ENCODE measurements at regions of chr6 and their contacts with region 1.

Region 1: DNA sequence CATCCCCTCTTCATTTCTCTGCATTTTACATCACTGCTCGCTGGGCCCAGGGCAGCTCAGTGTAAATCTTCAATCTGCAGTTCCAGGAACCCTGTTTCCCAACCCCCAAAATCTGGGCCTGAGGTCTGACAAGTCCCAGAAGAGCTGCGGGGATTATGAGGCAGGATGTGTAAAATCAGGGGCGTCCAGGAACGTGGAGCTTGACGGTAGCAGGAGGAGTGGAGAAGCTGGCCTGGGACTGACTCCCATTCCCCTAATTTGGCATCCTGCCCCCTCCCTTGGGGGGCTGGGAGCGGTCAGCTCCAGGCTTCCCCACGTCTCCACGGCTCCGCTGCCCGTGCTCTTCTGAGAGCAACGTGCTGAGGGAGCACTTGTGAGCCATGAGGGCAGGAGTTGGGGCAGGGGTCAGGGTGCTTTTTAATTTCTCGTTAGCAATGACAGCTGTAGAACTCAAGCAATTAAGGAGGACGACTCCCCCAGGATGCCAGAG is 23.4 kb upstream of the VEGFA start:
- DNase-seq: no peak
- H3K4me3 ChIP-seq: no peak overlapping the region
- CTCF ChIP-seq: no peak

Region 2: DNA sequence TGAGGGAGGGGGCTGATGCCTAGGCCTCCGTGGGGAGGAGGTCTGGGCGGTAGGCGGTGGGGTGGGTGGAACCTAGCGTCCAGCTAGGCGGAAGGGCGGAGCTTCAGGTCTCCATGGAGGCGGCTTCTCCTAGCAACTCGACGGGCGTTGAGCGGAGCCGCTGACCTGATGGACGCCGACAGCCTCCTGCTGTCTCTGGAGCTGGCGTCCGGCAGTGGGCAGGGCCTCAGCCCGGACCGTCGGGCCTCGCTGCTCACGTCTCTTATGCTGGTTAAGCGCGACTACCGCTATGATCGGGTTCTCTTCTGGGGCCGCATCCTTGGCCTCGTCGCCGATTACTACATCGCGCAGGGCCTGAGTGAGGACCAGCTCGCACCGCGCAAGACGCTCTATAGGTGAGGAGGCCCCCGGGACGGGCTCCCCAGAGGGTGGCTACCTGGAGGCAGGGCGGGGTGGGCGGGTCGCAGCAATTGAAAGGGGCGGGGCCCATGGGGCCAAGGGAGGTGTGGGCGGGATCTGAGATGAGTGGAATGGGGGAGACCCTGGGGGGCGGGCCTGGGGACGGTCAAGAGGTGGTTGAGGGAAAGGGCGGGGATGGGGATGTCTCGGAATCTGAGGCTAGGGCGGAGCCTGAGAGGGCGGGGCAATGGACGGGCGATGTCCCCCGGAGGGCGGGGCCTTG is 101.6 kb before region 1 on chr6 and contains the start of gene RSPH9:
- in situ Hi-C with region 1: loop called (anchors 5 kb)
- DNase-seq: no peak
- H3K4me3 ChIP-seq: peak within 1 kb of the TSS; percentile 45
- CTCF ChIP-seq: no peak

Region 3: DNA sequence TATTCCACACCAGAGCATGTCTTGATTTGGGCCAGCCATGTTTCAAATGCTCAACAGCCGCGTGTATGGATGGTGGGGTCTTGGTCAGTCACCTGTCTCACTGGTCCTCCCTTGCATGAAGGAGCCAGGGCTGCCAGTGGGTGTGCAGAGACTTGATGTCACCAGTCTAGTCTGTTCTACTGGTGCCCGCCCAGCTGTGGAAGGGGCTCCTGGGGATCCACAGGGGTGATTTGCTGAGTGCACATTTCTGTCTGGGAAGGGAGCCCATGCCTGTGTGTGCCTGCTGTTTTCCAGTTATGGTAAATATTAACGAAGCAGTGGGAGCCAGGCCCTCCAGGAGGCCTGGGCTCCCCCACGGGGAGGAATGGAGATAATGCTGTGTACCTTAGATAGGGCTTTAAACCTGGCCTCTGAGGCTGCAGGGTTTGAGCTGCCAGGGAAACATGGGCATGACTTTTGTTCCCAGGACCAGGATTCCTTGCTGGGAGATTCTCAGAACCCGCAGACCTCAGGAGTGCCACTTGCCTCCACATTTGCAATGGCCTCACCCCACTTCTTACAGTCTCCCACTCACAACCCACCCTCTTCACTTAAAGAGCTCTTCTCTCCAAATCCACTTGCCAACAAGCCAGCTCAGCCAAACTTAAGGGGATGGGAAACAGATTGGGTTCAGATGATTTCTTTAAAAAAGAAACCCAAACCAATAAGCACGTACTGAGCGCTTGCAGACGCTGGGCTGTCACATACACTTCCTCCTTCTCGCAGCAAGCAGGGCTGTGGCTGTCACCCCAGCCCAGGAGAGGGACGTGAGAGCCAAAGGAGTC is 77.4 kb after region 1 on chr6:
- in situ Hi-C with region 1: no loop called
- DNase-seq: no peak
- H3K4me3 ChIP-seq: no peak overlapping the region
- CTCF ChIP-seq: no peak

Measured in astrocyte of the cerebellum (primary cell).